HEK293T (cell line): ENCODE measurements at regions of chr12 and their contacts with region 1.

Region 1: DNA sequence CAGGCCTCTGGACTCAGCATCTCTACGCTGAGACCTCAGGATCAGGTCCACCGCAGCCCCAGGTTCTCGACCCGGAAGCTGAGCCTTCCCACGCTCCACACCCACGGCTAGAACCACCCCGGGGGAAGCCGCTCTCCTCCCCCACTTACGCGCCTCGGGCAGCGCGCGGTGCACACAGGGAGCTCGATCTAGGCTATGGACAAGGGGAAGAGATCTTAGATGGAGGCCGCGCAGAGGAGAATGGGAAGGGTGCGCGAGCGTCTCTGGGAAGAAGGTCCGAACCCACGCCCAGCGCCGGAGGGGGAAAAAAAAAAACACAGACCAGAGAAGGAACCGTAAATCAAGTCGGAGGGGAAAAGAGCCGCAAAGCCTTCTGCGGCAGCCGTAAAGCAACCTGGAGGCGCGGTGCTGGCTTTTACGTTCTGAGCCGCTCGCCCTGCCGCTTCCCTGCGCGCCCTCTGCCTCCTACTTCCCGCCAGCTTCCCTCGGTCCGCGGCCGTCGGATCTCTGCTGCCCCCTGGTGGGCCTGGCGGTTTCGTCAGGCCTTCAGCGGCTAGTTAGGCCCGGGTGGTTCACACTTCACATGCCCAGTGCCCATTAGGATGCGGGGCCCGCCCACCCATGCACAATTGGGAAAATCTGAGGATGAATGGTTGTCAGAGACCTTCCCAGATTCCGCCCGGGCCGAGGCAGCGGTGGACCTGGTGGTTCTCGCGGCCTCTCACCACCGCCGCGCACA is at the start of gene RAD52:
- DNase-seq: peak; percentile 91

Region 2: GRCh38 chr12:990661-991349 is 41.2 kb after region 1 on chr12 and contains the start of gene ERC1:
- CTCF ChIA-PET with region 1: interaction called, 3 read pairs
- POLR2A ChIA-PET with region 1: interaction called, 15 read pairs
- DNase-seq: peak; percentile 91

Region 3: DNA sequence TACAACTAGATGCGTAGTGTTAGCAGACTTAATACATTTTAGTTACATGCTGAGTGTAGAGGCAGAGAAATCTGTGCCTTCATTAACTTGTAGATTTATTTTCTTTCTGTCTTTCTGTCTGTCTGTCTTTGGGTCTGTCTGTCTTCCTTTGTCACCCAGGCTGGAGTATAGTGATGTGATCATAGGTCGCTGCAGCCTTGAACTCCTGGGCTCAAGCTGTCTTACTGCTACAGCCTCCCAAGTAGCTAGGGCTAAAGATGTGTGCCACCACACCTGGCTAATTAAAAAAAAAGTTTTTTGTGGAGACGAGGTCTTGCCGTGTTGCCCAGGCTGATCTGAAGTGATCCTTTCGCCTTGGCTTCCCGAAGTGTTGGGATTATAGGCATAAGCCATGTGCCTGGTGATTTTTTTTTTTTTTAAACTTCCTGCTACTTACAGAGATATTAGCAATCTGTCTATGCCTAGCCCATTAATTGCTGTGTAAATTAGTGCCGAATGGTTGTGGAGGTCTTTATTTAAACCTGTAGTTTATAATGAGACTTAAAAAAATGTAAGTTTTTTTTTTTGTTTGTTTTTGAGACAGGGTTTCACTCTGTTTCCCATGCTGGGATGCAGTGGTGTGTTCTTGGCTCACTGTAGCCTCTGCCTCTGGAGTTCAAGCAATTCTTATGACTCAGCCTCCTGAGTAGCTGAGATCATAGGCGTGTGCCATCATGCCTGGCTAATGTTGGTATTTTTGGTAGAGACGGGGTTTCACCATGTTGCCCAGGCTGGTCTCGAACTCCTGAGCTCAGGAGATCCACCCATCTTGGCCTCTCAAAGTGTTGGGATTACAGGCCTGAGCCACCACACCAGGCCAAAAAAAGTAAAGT is 64.2 kb after region 1 on chr12:
- CTCF ChIA-PET with region 1: no interaction called
- POLR2A ChIA-PET with region 1: no interaction called
- DNase-seq: no peak

Region 4: DNA sequence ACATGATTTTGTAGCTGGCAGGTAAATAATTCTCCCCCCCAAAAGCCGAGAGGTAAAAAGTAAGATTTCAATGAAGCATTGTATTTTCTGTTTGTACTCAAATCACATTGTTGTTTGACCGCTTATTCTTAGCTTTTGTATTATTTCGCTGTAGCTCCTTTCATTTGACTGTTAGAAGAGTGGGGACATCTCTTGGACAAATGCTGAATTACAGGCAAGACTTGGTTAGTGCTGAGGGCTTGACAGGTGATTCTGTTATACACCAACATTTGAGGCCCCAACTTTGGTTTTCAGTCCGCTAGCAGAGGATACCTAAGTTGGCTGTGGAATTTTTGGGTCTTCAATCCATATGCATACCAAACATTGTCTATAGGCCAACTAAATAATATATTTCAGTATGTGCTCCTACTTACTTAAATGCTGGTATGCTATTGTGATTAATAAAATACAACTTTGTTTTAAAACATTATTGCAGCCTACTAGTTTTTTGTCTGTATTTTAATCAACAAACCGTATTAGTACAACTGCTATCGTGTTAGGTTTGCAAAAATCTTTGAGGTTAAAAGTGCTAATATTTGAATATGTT is 143.6 kb after region 1 on chr12:
- CTCF ChIA-PET with region 1: interaction called, 4 read pairs
- POLR2A ChIA-PET with region 1: interaction called, 11 read pairs
- DNase-seq: peak; percentile 36